ENCODE measurements at regions of chr20 and their contacts with region 1.

Region 1: DNA sequence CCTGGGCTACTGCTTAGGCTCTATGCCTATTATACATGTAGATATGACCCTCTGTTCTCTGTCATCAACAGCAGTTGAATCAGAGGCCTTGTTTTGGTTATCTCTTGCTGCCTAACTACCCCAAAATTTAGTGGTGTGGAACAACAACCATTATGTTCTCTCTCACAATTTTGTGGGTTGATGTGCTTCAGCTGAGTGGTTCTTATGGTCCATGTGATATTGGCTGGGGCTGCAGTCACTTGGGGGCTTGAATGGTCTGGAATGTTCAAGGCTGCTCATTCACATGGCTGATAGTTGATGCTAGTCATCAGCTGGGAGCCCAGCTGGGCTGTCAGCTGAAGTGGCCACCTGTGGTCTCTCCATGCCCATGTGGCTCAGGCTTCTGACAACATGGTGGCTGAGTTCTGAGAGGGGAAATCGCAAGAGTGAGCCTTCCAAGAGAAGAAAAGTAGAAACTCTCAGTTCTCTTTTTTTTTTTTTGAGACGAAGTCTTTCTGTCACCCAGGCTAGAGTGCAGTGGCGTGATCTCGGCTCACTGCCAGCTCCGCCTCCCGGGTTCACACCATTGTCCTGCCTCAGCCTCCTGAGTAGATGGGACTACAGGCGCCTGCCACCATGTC is 47.8 kb downstream of the SHLD1 start:
- DNase-seq: no peak
- H3K4me3 ChIP-seq: no peak overlapping the region
- H3K27ac ChIP-seq: no peak overlapping the region
- H3K4me1 ChIP-seq: peaks cover 0 to 10% (median 0%) of the 10 kb centered on the region in 3 donors
- H3K27me3 ChIP-seq: no peaks in the 10 kb centered on the region
- CTCF ChIP-seq: no peak

Region 2: GRCh38 chr20:5448449-5449118 is 349.4 kb before region 1 on chr20:
- intact Hi-C with region 1: no loop called
- DNase-seq: peak in 3 of 5 donors; percentile 54 to 67 (median 66)
- H3K4me3 ChIP-seq: no peak overlapping the region
- H3K27ac ChIP-seq: no peak overlapping the region
- H3K4me1 ChIP-seq: no peaks in the 10 kb centered on the region
- H3K27me3 ChIP-seq: no peaks in the 10 kb centered on the region
- CTCF ChIP-seq: peak; percentile 54

Region 3: DNA sequence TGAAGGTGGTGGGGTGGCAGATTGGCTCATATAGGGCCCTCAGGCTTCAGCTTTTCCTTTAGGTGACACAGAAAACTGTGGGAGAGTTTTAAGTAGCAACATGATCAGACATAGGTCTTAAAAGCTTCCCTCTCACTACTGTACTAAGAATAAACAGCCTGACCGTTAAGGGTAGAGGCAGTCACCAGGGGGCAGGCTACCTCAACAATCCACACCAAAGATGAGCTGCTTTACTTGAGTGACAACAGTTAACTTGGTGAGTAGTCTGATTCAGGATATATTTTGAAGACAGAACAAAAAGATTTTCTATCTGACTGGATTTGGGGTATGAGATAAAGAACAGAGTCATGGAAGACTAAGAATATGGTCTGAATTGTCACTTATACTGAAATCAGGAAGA is 240.8 kb before region 1 on chr20:
- intact Hi-C with region 1: loop called (anchors 10 kb)
- DNase-seq: peak in 3 of 5 donors; percentile 47 to 52 (median 51)
- H3K4me3 ChIP-seq: no peak overlapping the region
- H3K27ac ChIP-seq: no peak overlapping the region
- H3K4me1 ChIP-seq: no peaks in the 10 kb centered on the region
- H3K27me3 ChIP-seq: no peaks in the 10 kb centered on the region
- CTCF ChIP-seq: peak; percentile 58

Region 4: GRCh38 chr20:6017880-6018279 is 219.9 kb after region 1 on chr20:
- intact Hi-C with region 1: no loop called
- DNase-seq: no peak
- H3K4me3 ChIP-seq: no peak overlapping the region
- H3K27ac ChIP-seq: no peak overlapping the region
- H3K4me1 ChIP-seq: no peaks in the 10 kb centered on the region
- H3K27me3 ChIP-seq: no peaks in the 10 kb centered on the region
- CTCF ChIP-seq: no peak

Region 5: GRCh38 chr20:6034134-6034969 is 236.4 kb after region 1 on chr20:
- intact Hi-C with region 1: no loop called
- DNase-seq: peak in 1 of 5 donors; percentile 31
- H3K4me3 ChIP-seq: no peak overlapping the region
- H3K27ac ChIP-seq: no peak overlapping the region
- H3K4me1 ChIP-seq: no peaks in the 10 kb centered on the region
- H3K27me3 ChIP-seq: no peaks in the 10 kb centered on the region
- CTCF ChIP-seq: no peak

Region 6: GRCh38 chr20:6070829-6071695 is 273.1 kb after region 1 on chr20:
- intact Hi-C with region 1: no loop called
- DNase-seq: peak in 4 of 5 donors; percentile 31 to 78 (median 60)
- H3K4me3 ChIP-seq: no peak overlapping the region
- H3K27ac ChIP-seq: no peak overlapping the region
- H3K4me1 ChIP-seq: no peaks in the 10 kb centered on the region
- H3K27me3 ChIP-seq: no peaks in the 10 kb centered on the region
- CTCF ChIP-seq: no peak

Measured in kidney (tissue), 22 donors.